ENCODE measurements at regions of chr6 and their contacts with region 1.

Region 1: GRCh38 chr6:159715166-159715565 is 12.1 kb upstream of the WTAP start:
- DNase-seq: no peak
- ATAC-seq: no peak
- H3K4me3 ChIP-seq: no peak overlapping the region
- H3K4me3 Mint-ChIP-seq: no peak overlapping the region
- H3K27ac ChIP-seq: no peak overlapping the region
- H3K27ac Mint-ChIP-seq: no peak overlapping the region
- H3K4me1 ChIP-seq: no peaks in the 10 kb centered on the region
- H3K4me1 Mint-ChIP-seq: no peaks in the 10 kb centered on the region
- H3K27me3 ChIP-seq: no peaks in the 10 kb centered on the region
- H3K27me3 Mint-ChIP-seq: no peaks in the 10 kb centered on the region
- CTCF ChIP-seq: no peak

Region 2: DNA sequence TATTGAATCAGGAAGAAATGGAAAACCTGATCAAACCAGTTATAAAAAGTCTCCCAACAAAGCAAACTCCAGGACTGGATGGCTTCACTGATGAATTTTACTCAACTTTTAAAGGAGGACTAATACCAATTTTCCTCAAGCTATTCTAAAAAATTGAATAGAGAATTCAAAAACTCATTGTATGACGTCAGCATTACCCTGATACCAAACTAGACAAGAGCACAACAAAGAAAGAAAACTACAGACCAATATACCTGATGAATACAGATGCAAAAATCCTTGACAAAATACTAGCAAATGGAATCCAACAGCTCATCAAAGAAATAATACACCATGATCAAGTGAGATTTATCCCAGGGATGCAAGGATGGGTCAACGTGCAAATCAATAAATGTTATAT is 373.0 kb before region 1 on chr6:
- CTCF ChIA-PET with region 1: no interaction called
- POLR2A ChIA-PET with region 1: no interaction called
- intact Hi-C with region 1: no loop called
- DNase-seq: no peak
- ATAC-seq: no peak
- H3K4me3 ChIP-seq: no peak overlapping the region
- H3K4me3 Mint-ChIP-seq: no peak overlapping the region
- H3K27ac ChIP-seq: no peak overlapping the region
- H3K27ac Mint-ChIP-seq: no peak overlapping the region
- H3K4me1 ChIP-seq: no peaks in the 10 kb centered on the region
- H3K4me1 Mint-ChIP-seq: no peaks in the 10 kb centered on the region
- H3K27me3 ChIP-seq: no peaks in the 10 kb centered on the region
- H3K27me3 Mint-ChIP-seq: peaks cover 8% of the 10 kb centered on the region
- CTCF ChIP-seq: no peak

Region 3: GRCh38 chr6:159450815-159451465 is 264.2 kb before region 1 on chr6:
- CTCF ChIA-PET with region 1: no interaction called
- POLR2A ChIA-PET with region 1: no interaction called
- intact Hi-C with region 1: no loop called
- DNase-seq: no peak
- ATAC-seq: no peak
- H3K4me3 ChIP-seq: no peak overlapping the region
- H3K4me3 Mint-ChIP-seq: no peak overlapping the region
- H3K27ac ChIP-seq: no peak overlapping the region
- H3K27ac Mint-ChIP-seq: no peak overlapping the region
- H3K4me1 ChIP-seq: no peaks in the 10 kb centered on the region
- H3K4me1 Mint-ChIP-seq: no peaks in the 10 kb centered on the region
- H3K27me3 ChIP-seq: no peaks in the 10 kb centered on the region
- H3K27me3 Mint-ChIP-seq: peaks cover 18% of the 10 kb centered on the region
- CTCF ChIP-seq: no peak

Region 4: DNA sequence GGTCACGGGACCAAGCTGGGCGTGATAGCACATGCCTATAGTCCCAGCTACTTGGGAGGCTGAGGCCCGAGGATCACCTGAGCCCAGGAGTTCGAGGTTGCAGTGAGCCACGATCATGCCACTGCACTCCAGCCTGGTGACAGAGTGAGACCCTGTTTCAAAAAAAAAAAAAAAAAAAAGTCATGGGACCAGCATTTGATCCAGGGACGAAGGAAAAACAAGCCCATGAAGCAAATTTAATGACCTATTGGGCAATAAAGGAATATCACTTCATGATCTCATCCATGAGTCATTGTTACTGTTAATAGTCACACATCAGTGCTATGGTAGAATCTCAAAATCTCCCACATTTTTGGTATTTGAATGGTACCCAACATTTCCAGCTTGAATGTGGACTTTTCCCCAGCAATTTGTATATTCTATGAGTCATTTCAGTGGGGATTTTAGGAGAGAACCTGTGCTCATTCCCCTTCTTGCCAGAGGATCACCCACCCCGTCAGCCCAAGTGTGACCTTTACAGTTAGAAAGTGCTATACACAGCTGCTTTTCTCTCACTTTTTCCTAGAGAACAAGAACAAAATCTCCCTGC is 13.7 kb before region 1 on chr6:
- CTCF ChIA-PET with region 1: interaction called, 19 read pairs
- POLR2A ChIA-PET with region 1: no interaction called
- intact Hi-C with region 1: loop called in 1 of 2 experiments (anchors 2 kb)
- DNase-seq: no peak
- ATAC-seq: no peak
- H3K4me3 ChIP-seq: no peak overlapping the region
- H3K4me3 Mint-ChIP-seq: no peak overlapping the region
- H3K27ac ChIP-seq: no peak overlapping the region
- H3K27ac Mint-ChIP-seq: no peak overlapping the region
- H3K4me1 ChIP-seq: no peaks in the 10 kb centered on the region
- H3K4me1 Mint-ChIP-seq: no peaks in the 10 kb centered on the region
- H3K27me3 ChIP-seq: no peaks in the 10 kb centered on the region
- H3K27me3 Mint-ChIP-seq: no peaks in the 10 kb centered on the region
- CTCF ChIP-seq: no peak